ENCODE measurements at regions of chr5 and their contacts with region 1.

Region 1: GRCh38 chr5:42889311-42889933 is 77.7 kb upstream of the SELENOP start:
- DNase-seq: peak; percentile 82
- ATAC-seq: peak; percentile 95
- H3K4me3 ChIP-seq: no peak overlapping the region
- H3K27ac ChIP-seq: no peak overlapping the region
- H3K4me1 ChIP-seq: peaks cover 49% of the 10 kb centered on the region
- H3K27me3 ChIP-seq: no peaks in the 10 kb centered on the region
- CTCF ChIP-seq: peak; percentile 91
- EP300 ChIP-seq: no peak
- POLR2A ChIP-seq: no peak
- RAD21 ChIP-seq: peak; percentile 83

Region 2: DNA sequence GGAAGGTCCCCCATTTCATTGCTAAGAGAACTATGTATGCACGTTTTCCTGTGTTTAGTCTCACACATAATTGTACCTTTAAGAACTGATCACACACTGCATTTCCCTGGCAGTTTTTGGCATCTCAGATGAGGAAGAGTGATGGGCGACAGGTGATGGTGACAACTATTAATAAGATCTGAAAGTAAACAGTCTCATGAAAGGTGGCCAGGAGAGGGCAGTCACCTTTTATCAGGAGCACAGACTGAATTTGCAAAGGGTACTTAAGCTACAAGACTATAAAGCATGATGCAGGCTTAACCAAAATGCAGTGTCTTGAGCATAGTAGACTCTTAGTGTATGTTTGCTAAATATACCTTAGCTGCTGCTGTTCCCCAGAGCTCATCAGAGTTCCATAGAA is 374.7 kb before region 1 on chr5:
- CTCF ChIA-PET with region 1: no interaction called
- POLR2A ChIA-PET with region 1: no interaction called
- in situ Hi-C with region 1: no loop called
- intact Hi-C with region 1: loop called (anchors 10 kb)
- DNase-seq: peak; percentile 3
- ATAC-seq: peak; percentile 58
- H3K4me3 ChIP-seq: no peak overlapping the region
- H3K27ac ChIP-seq: no peak overlapping the region
- H3K4me1 ChIP-seq: peaks cover 32% of the 10 kb centered on the region
- H3K27me3 ChIP-seq: no peaks in the 10 kb centered on the region
- CTCF ChIP-seq: peak; percentile 41
- EP300 ChIP-seq: no peak
- POLR2A ChIP-seq: no peak
- RAD21 ChIP-seq: no peak

Region 3: DNA sequence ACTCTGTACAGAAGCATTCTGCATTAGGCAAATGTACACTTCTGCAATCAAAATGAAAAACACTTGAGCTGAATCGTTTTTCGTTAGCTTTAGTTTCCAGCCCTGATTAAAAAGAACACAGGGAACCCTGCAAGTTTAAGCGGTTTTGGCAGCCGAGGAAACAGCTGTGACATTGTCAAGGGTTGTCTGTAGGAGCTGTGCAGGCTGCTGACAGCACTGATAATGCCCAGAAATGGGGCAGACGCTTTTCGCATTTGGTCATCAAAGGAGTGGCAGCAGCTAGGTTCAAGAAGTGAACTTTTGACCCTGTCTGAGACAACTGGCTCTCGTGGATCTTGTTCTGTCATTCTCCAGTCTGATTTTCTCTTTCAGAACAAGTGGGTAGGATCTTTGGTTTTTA is 298.4 kb before region 1 on chr5:
- CTCF ChIA-PET with region 1: no interaction called
- POLR2A ChIA-PET with region 1: no interaction called
- in situ Hi-C with region 1: no loop called
- intact Hi-C with region 1: loop called (anchors 10 kb)
- DNase-seq: no peak
- ATAC-seq: no peak
- H3K4me3 ChIP-seq: no peak overlapping the region
- H3K27ac ChIP-seq: no peak overlapping the region
- H3K4me1 ChIP-seq: no peaks in the 10 kb centered on the region
- H3K27me3 ChIP-seq: no peaks in the 10 kb centered on the region
- CTCF ChIP-seq: no peak
- EP300 ChIP-seq: no peak
- POLR2A ChIP-seq: no peak
- RAD21 ChIP-seq: no peak

Region 4: GRCh38 chr5:42798284-42799240 is 90.9 kb before region 1 on chr5:
- CTCF ChIA-PET with region 1: no interaction called
- POLR2A ChIA-PET with region 1: interaction called, 12 read pairs
- in situ Hi-C with region 1: loop called (anchors 10 kb)
- intact Hi-C with region 1: no loop called
- DNase-seq: peak; percentile 28
- ATAC-seq: peak; percentile 70
- H3K4me3 ChIP-seq: no peak overlapping the region
- H3K27ac ChIP-seq: no peak overlapping the region
- H3K4me1 ChIP-seq: no peaks in the 10 kb centered on the region
- H3K27me3 ChIP-seq: no peaks in the 10 kb centered on the region
- CTCF ChIP-seq: no peak
- EP300 ChIP-seq: no peak
- POLR2A ChIP-seq: peak; percentile 31 to 44; a peak in 2 of 4 replicates
- RAD21 ChIP-seq: no peak

Measured in HepG2 (cell line).